ENCODE measurements at regions of chr15 and their contacts with region 1.

Region 1: GRCh38 chr15:96285305-96285704 is 45.2 kb upstream of the NR2F2 start:
- DNase-seq: peak in 1 of 2 donors; percentile 19
- ATAC-seq: peak; percentile 58 to 74 (median 66)
- H3K4me3 ChIP-seq: no peak overlapping the region
- H3K27ac ChIP-seq: peak overlapping the region; percentile 71
- H3K4me1 ChIP-seq: peaks cover 10% of the 10 kb centered on the region
- H3K27me3 ChIP-seq: no peaks in the 10 kb centered on the region
- CTCF ChIP-seq: no peak

Region 2: DNA sequence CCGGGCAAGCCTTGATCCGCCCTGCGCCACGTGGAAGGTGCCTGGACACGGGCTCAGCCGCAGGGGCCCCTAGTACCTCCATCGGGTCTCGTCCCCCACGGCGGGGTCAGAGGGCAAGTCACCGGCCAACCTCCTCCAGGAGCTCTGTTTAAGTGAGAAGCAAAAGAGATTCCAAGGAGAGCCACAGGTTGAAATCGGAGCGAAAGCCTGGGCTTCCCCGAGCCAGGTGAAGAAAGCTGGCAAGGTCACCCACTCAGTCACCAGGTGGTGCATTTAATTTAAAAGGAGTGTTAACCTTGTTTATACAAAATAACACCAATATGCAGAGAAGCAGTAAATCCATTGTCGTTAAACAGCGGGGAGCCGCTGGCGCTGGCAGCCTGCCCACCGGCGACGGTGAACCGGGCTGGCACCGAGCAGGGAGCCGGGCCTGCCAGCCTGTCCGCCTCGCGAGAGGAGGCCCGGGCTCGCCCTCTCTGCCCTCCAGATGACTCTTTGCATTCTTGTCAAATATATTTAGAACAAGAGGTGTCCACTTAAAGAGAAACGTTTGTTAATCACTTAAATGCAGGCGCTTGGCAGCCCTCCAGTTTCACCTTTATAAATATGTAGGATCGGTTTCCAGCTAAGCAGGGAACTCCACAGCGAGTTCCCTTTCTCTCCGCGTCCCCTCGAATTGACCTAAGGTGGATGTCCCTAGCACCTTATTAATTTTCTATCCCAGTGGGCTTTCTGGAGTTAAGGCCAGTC is 232.1 kb before region 1 on chr15:
- intact Hi-C with region 1: loop called in 1 of 2 experiments (anchors 10 kb)
- DNase-seq: peak; percentile 24 to 78
- ATAC-seq: peak; percentile 86 to 94 (median 90)
- H3K4me3 ChIP-seq: peak overlapping the region; percentile 65
- H3K27ac ChIP-seq: peak overlapping the region; percentile 85
- H3K4me1 ChIP-seq: peaks cover 7% of the 10 kb centered on the region
- H3K27me3 ChIP-seq: no peaks in the 10 kb centered on the region
- CTCF ChIP-seq: no peak